IMR-90 (cell line): ENCODE measurements at regions of chr3 and their contacts with region 1.

Region 1: GRCh38 chr3:67245545-67245944 is 247.4 kb downstream of the KBTBD8 start:
- DNase-seq: no peak
- ATAC-seq: no peak
- H3K4me3 ChIP-seq: no peak overlapping the region
- H3K27ac ChIP-seq: no peak overlapping the region
- H3K4me1 ChIP-seq: no peaks in the 10 kb centered on the region
- H3K27me3 ChIP-seq: no peaks in the 10 kb centered on the region
- CTCF ChIP-seq: no peak
- POLR2A ChIP-seq: no peak
- RAD21 ChIP-seq: no peak

Region 2: DNA sequence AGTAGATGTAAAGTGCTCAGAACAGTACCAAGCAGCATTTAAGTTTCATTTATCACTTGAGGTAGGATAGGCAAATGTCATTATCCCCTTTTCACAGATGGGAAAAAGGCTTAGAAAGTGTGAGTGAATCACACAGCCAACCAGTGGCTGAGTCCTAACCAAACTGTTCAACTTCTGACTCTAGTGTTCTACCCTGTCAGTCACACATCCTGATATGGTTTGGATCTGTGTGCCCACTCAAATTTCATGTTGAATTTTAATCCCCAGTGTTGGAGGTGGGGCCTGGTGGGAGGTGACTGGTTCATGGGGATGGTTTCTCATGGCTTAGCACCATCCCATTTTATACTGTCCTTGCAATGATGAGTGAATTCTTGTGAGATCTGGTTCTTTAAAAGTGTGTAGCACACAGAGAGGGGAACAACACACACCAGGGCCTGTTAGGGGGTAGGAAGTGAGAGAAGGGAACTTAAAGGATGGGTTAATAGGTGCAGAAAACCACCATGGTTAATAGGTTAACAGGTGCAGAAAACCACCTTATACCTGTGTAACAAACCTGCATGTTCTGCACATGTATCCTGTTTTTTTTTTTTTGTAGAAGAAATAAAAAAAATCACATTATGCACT is 104.1 kb after region 1 on chr3:
- CTCF ChIA-PET with region 1: no interaction called
- POLR2A ChIA-PET with region 1: no interaction called
- dilution Hi-C with region 1: no loop called
- in situ Hi-C with region 1: loop called (anchors 25 kb)
- intact Hi-C with region 1: no loop called
- DNase-seq: peak; percentile 15
- ATAC-seq: no peak
- H3K4me3 ChIP-seq: no peak overlapping the region
- H3K27ac ChIP-seq: no peak overlapping the region
- H3K4me1 ChIP-seq: no peaks in the 10 kb centered on the region
- H3K27me3 ChIP-seq: no peaks in the 10 kb centered on the region
- CTCF ChIP-seq: no peak
- POLR2A ChIP-seq: no peak
- RAD21 ChIP-seq: no peak

Region 3: GRCh38 chr3:67384760-67385397 is 139.3 kb after region 1 on chr3:
- CTCF ChIA-PET with region 1: no interaction called
- POLR2A ChIA-PET with region 1: no interaction called
- dilution Hi-C with region 1: no loop called
- in situ Hi-C with region 1: no loop called
- intact Hi-C with region 1: no loop called
- DNase-seq: peak; percentile 50
- ATAC-seq: peak; percentile 54
- H3K4me3 ChIP-seq: no peak overlapping the region
- H3K27ac ChIP-seq: no peak overlapping the region
- H3K4me1 ChIP-seq: peaks cover 4% of the 10 kb centered on the region; the same call in 1 of the 2 replicates
- H3K27me3 ChIP-seq: no peaks in the 10 kb centered on the region
- CTCF ChIP-seq: peak; percentile 60
- POLR2A ChIP-seq: no peak
- RAD21 ChIP-seq: peak; percentile 68